Activated CD4-positive, alpha-beta T cell treated with anti-CD3 and anti-CD28 coated beads, Interleukin-2, amount 10 ng/mL, durations not matched to agents 24 days and 14 days (primary cell): ENCODE measurements at regions of chr18 and their contacts with region 1.

Region 1: GRCh38 chr18:54284981-54285785 is 15.9 kb downstream of the POLI start:
- DNase-seq: peak; percentile 82
- H3K4me3 Mint-ChIP-seq: peak overlapping the region; percentile 19
- H3K27ac Mint-ChIP-seq: peak overlapping the region; percentile 78
- H3K4me1 Mint-ChIP-seq: peaks cover 18% of the 10 kb centered on the region
- H3K27me3 Mint-ChIP-seq: no peaks in the 10 kb centered on the region

Region 2: GRCh38 chr18:54173980-54174630 is 111.1 kb before region 1 on chr18:
- intact Hi-C with region 1: loop called (anchors 1 kb)
- DNase-seq: peak; percentile 63
- H3K4me3 Mint-ChIP-seq: peak overlapping the region; percentile 39
- H3K27ac Mint-ChIP-seq: peak overlapping the region; percentile 90
- H3K4me1 Mint-ChIP-seq: peaks cover 61% of the 10 kb centered on the region
- H3K27me3 Mint-ChIP-seq: no peaks in the 10 kb centered on the region

Region 3: DNA sequence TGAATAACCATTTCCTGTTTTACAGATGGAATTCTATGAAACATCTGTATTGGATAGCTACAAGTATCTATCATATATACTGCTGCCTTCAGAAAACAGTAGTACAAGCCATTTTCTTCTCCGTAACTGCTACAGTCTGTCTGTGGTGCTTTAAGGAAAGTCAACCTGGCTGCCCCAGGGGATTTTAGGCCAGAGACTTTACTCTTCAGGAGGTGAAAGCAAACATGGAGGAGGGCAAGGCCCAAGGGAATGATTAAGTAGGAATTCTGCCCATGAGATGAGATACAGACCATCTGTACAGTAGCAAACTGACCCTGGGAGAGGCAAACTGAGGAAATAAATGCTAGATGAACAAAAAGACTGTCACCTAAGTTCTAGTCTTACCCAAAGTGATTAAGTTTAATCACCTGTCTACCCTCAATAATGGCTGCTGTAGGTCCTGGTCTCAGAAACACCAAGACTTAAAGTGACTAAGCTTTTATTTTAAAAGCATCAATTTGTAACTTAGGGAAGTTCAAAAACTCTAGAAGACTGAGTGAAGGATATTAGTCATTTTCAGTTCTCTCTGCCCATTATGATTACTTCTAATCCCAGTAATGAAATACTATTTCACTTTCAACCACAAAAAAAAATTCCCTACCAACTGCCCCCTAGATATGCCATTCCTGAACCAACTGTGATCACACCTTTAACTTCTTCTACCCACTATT is 75.6 kb before region 1 on chr18:
- intact Hi-C with region 1: loop called (anchors 1 kb)
- DNase-seq: no peak
- H3K4me3 Mint-ChIP-seq: peak overlapping the region; percentile 49
- H3K27ac Mint-ChIP-seq: peak overlapping the region; percentile 79
- H3K4me1 Mint-ChIP-seq: peaks cover 50% of the 10 kb centered on the region
- H3K27me3 Mint-ChIP-seq: no peaks in the 10 kb centered on the region

Region 4: GRCh38 chr18:54269893-54270844 is 15.0 kb before region 1 on chr18:
- intact Hi-C with region 1: loop called (anchors 2 kb)
- DNase-seq: peak; percentile 89
- H3K4me3 Mint-ChIP-seq: peak overlapping the region; percentile 85
- H3K27ac Mint-ChIP-seq: peak overlapping the region; percentile 95
- H3K4me1 Mint-ChIP-seq: peaks cover 40% of the 10 kb centered on the region
- H3K27me3 Mint-ChIP-seq: peaks cover 2% of the 10 kb centered on the region

Region 5: DNA sequence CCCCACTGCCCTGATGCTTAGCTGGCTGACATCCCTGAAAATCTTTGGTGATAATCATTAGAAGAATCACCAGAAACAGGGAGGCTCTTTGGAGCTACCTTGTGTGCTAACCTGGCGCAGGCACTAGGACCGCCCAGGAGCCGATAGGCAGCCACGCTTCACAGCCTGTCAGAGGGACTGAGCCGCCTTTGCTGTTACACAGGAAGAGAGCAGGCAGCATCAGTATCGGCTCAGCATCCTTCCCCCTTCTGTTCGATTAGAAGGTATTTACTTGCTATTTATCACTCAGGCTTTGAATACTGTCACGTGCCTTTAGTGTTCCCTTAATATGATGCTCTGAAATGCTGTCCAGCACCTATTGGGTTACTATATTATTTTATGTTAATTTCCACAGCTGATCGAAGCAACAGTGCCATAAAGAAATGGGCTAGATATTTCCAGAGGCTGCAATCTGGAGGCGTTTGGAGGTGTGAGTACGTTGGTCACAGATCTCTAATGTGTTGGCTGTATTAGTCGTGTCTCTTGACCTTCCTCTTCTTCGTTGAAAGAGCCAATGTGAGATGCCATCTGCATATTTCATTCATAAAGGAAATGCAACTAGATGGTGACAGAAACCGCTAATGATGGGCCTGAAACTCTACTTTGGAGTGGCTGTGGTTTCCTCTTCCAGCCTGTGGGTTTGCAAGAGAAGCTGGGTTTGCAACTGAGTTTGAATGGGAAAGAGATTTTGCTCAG is 432.7 kb after region 1 on chr18:
- intact Hi-C with region 1: loop called (anchors 5 kb)
- DNase-seq: peak; percentile 88
- H3K4me3 Mint-ChIP-seq: peak overlapping the region; percentile 77
- H3K27ac Mint-ChIP-seq: peak overlapping the region; percentile 15
- H3K4me1 Mint-ChIP-seq: peaks cover 48% of the 10 kb centered on the region
- H3K27me3 Mint-ChIP-seq: peaks cover 29% of the 10 kb centered on the region